Activated T-helper 1 cell treated with anti-CD3 and anti-CD28 coated beads, Interleukin-12 subunit alpha, Interleukin-12 subunit beta, Interleukin-2, Interleukin-4 antibody, amounts not matched to agents 30 ng/mL and 10 ng/mL and 1 ng/mL, durations not matched to agents 14 hours and 24 hours and 36 hours (primary cell): ENCODE measurements at regions of chr1 and their contacts with region 1.

Region 1: DNA sequence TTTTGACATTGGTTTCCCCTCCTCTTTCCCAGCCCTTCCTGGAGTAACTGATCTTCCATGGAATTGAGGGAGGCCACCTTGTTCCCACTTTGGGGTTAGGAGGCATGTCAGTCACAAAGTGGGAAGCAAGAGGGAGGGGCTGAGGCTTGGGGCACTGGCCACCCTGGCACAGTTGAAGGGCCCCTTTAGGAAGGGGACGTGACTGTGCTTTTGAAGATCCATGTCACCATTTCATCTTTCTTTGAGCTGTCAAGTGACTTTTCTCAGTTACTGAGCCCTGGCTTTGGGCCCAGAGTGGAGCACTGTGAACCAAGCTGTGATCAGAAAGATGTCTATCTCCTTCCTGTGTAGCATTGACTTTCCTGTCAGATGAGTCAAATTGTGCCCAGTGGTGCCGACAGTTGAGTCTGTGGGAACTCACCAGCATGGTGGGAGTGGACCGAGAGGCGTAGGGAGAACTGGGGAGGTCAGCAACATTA is 38.5 kb upstream of the TDRD10 start:
- DNase-seq: peak; percentile 67
- H3K4me3 Mint-ChIP-seq: peak overlapping the region; percentile 58
- H3K27ac Mint-ChIP-seq: peak overlapping the region; percentile 81
- H3K4me1 Mint-ChIP-seq: peaks cover 65% of the 10 kb centered on the region
- H3K27me3 Mint-ChIP-seq: peaks cover 3% of the 10 kb centered on the region

Region 2: GRCh38 chr1:154272217-154272998 is 191.1 kb before region 1 on chr1 and contains the start of gene HAX1:
- intact Hi-C with region 1: no loop called
- DNase-seq: peak; percentile 94
- H3K4me3 Mint-ChIP-seq: peak within 1 kb of the TSS; percentile 98
- H3K27ac Mint-ChIP-seq: peak within 1 kb of the TSS; percentile 97
- H3K4me1 Mint-ChIP-seq: peaks cover 46% of the 10 kb centered on the region
- H3K27me3 Mint-ChIP-seq: no peaks in the 10 kb centered on the region
- total RNA-seq, gene HAX1: 122 and 123 TPM in 2 replicates

Region 3: GRCh38 chr1:154497026-154497806 is 33.7 kb after region 1 on chr1:
- intact Hi-C with region 1: loop called (anchors 1 kb)
- DNase-seq: no peak
- H3K4me3 Mint-ChIP-seq: no peak overlapping the region
- H3K27ac Mint-ChIP-seq: no peak overlapping the region
- H3K4me1 Mint-ChIP-seq: peaks cover 30% of the 10 kb centered on the region
- H3K27me3 Mint-ChIP-seq: peaks cover 34% of the 10 kb centered on the region

Region 4: DNA sequence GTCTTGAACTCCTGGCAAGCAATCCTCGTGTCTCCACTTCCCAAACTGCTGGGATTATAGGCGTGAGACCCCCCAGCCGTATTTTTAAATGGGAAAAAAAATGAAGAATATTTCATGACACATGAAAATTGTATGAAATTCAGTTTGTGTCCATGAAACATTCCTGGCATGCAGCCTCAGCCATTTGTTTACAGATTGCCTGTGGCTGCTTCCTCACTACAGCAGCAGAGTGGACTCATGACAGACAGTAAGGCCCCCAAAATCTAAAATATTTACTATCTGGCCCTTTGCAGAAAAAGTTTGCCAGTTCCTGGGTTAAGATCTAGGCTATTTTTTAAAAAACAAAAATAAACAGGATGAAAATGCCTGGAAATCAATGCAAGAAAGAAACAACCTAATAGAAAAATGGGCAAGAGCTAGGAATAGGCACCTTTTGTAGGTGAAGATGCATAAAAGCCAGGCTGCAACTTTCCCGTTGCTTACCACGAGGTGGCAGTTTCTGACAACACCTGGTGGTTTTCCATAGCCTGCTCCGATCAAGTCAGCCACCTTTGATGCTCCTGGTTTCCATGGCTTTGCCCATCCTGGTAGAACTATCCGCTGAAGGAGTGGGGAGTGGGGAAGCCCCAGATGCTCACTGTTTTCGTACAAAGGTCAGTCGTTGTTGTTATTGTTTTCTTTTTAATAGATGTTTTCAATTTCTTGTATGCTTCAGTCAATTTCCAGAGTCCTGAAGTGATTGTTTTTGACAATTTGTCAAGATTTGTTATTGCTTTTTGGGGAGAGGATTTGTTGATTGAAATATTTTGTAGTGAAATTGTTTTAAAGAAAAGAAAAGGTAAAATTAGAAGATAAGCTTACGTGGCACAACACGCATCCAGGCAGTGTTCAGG is 70.6 kb after region 1 on chr1:
- intact Hi-C with region 1: no loop called
- DNase-seq: no peak
- H3K4me3 Mint-ChIP-seq: no peak overlapping the region
- H3K27ac Mint-ChIP-seq: no peak overlapping the region
- H3K4me1 Mint-ChIP-seq: no peaks in the 10 kb centered on the region
- H3K27me3 Mint-ChIP-seq: peaks cover 19% of the 10 kb centered on the region